Lower lobe of right lung (tissue), 2 donors: ENCODE measurements at regions of chr6 and their contacts with region 1.

Region 1: GRCh38 chr6:3258720-3259490 is at the start of gene PSMG4:
- DNase-seq: peak; percentile 96
- ATAC-seq: peak; percentile 98
- H3K4me3 ChIP-seq: peak within 1 kb of the TSS; percentile 97
- H3K27ac ChIP-seq: peak within 1 kb of the TSS; percentile 85
- H3K4me1 ChIP-seq: peaks cover 33% of the 10 kb centered on the region
- H3K27me3 ChIP-seq: no peaks in the 10 kb centered on the region
- CTCF ChIP-seq: no peak
- total RNA-seq, gene PSMG4: 19.1 TPM

Region 2: GRCh38 chr6:3124667-3125066 is 134.2 kb before region 1 on chr6:
- intact Hi-C with region 1: loop called (anchors 10 kb)
- DNase-seq: no peak
- ATAC-seq: no peak
- H3K4me3 ChIP-seq: no peak overlapping the region
- H3K27ac ChIP-seq: no peak overlapping the region
- H3K4me1 ChIP-seq: peaks cover under 1% of the 10 kb centered on the region
- H3K27me3 ChIP-seq: no peaks in the 10 kb centered on the region
- CTCF ChIP-seq: no peak

Region 3: GRCh38 chr6:3209114-3210023 is 49.5 kb before region 1 on chr6:
- intact Hi-C with region 1: no loop called
- DNase-seq: no peak
- ATAC-seq: peak; percentile 85 to 86
- H3K4me3 ChIP-seq: no peak overlapping the region
- H3K27ac ChIP-seq: no peak overlapping the region
- H3K4me1 ChIP-seq: peaks cover 4% of the 10 kb centered on the region
- H3K27me3 ChIP-seq: no peaks in the 10 kb centered on the region
- CTCF ChIP-seq: no peak